ENCODE measurements at regions of chr17 and their contacts with region 1.

Region 1: GRCh38 chr17:55264645-55265298 is at the start of gene HLF:
- DNase-seq: peak; percentile 60
- ATAC-seq: peak; percentile 96
- H3K4me3 Mint-ChIP-seq: peak within 1 kb of the TSS; percentile 64
- H3K27ac Mint-ChIP-seq: no peak within 1 kb of the TSS
- H3K4me1 Mint-ChIP-seq: peaks cover 22% of the 10 kb centered on the region
- H3K27me3 Mint-ChIP-seq: peaks cover 80% of the 10 kb centered on the region
- CTCF ChIP-seq: no peak
- total RNA-seq, gene HLF: 0.10 and 0.69 TPM in 2 replicates

Region 2: DNA sequence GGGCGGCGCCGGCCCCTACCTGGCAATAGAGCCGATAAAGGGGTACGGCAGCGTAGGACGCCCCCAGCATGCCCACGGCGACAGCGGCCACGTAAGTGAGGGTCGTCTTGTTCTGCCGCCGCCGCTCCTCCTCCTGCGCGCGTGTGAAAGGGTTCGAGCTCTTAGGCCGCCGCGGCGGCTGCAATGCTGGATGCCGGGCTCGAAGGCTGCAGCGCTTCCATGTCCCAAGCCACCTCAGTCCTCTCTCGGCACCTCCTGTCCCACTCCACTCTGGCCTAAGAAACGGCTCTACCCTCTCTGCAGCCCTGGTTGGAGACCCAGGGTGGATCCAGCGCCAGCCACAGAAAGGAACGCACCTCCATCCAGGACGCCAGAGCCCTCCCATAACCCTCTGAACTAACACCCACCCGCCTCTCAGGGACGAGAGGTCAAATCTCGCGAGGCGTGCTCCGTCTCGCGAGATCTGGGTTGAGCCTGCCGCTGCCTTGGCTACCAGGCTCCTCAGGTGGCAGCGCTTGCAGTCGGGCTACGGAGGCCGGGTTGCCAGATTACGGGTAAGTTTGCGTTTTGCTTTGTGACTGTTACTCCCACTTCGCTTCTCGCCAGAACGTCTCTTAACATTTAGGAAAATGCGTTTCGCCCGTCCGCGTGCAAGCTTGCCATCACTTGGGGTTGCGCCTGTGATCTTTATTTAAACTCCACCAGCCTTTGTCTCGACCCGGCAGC is 296.3 kb before region 1 on chr17 and contains the starts of genes COX11 and STXBP4:
- CTCF ChIA-PET with region 1: no interaction called
- POLR2A ChIA-PET with region 1: no interaction called
- intact Hi-C with region 1: loop called (anchors 10 kb)
- DNase-seq: peak; percentile 90
- ATAC-seq: peak; percentile 97
- H3K4me3 Mint-ChIP-seq: no peak within 1 kb of the TSS
- H3K27ac Mint-ChIP-seq: no peak within 1 kb of the TSS
- H3K4me1 Mint-ChIP-seq: peaks cover 24% of the 10 kb centered on the region
- H3K27me3 Mint-ChIP-seq: no peaks in the 10 kb centered on the region
- CTCF ChIP-seq: no peak
- total RNA-seq, gene COX11: 38.5 and 46.5 TPM in 2 replicates
- total RNA-seq, gene STXBP4: 6.9 and 9.5 TPM in 2 replicates

Region 3: GRCh38 chr17:55238179-55238930 is 26.4 kb before region 1 on chr17:
- CTCF ChIA-PET with region 1: no interaction called
- POLR2A ChIA-PET with region 1: interaction called, 7 read pairs
- intact Hi-C with region 1: loop called (anchors 1 kb)
- DNase-seq: peak; percentile 62
- ATAC-seq: peak; percentile 84
- H3K4me3 Mint-ChIP-seq: peak overlapping the region; percentile 79
- H3K27ac Mint-ChIP-seq: no peak overlapping the region
- H3K4me1 Mint-ChIP-seq: peaks cover 35% of the 10 kb centered on the region
- H3K27me3 Mint-ChIP-seq: peaks cover 24% of the 10 kb centered on the region
- CTCF ChIP-seq: no peak

Region 4: GRCh38 chr17:55750750-55751657 is 486.2 kb after region 1 on chr17 and contains the start of gene PCTP:
- CTCF ChIA-PET with region 1: no interaction called
- POLR2A ChIA-PET with region 1: no interaction called
- intact Hi-C with region 1: loop called (anchors 10 kb)
- DNase-seq: peak; percentile 80
- ATAC-seq: peak; percentile 98
- H3K4me3 Mint-ChIP-seq: peak within 1 kb of the TSS; percentile 84
- H3K27ac Mint-ChIP-seq: no peak within 1 kb of the TSS
- H3K4me1 Mint-ChIP-seq: peaks cover 14% of the 10 kb centered on the region
- H3K27me3 Mint-ChIP-seq: peaks cover 5% of the 10 kb centered on the region
- CTCF ChIP-seq: no peak
- total RNA-seq, gene PCTP: 8.0 and 9.0 TPM in 2 replicates